A673 (cell line): ENCODE measurements at regions of chr18 and their contacts with region 1.

Region 1: DNA sequence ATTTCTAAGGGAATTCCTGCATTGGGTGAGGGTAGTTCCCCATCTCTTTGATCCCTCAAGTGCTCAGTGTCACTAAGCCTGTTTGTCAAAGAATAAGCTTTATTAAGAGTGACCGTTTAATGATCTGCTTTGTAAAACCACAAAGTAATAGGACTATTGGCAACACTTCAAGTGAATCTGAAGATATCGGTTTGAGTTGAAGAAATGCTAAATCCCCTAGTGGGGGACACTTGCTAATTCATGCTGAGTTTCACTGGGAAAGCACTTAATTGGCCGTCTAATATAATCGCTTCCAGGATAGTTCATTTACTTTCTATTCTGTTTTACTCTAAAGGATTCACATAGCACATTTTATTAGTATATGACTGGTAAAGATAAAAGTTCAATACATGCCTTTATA is 54.4 kb downstream of the DTNA start:
- DNase-seq: peak; percentile 47
- H3K4me3 ChIP-seq: no peak overlapping the region
- H3K27ac ChIP-seq: no peak overlapping the region
- H3K4me1 ChIP-seq: peaks cover 8% of the 10 kb centered on the region
- H3K27me3 ChIP-seq: no peaks in the 10 kb centered on the region
- CTCF ChIP-seq: peak; percentile 32; the same call in 1 of the 2 replicates

Region 2: DNA sequence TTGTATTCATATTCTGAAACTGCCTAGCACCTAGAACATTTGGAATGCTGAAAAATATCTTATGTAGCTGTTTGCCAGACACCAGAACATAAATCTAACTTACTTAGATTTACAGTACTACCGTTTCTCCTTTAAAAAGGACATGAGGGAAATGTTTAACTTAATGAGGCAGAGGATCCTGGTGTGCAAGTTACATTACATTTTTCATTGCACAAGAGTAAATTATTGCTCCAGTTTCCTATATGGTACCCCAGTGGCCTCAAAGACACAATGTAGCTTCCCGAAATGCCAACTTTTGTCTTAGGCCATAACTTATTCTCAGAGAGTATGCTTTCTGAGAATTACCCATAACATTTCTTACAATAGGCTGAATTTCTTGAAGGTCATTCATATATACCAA is 159.9 kb before region 1 on chr18:
- CTCF ChIA-PET with region 1: interaction called, 12 read pairs
- POLR2A ChIA-PET with region 1: no interaction called
- intact Hi-C with region 1: no loop called
- DNase-seq: peak; percentile 78
- H3K4me3 ChIP-seq: no peak overlapping the region
- H3K27ac ChIP-seq: peak overlapping the region; percentile 28
- H3K4me1 ChIP-seq: peaks cover 37% of the 10 kb centered on the region
- H3K27me3 ChIP-seq: no peaks in the 10 kb centered on the region
- CTCF ChIP-seq: no peak

Region 3: GRCh38 chr18:34783501-34783900 is 19.1 kb after region 1 on chr18:
- CTCF ChIA-PET with region 1: no interaction called
- POLR2A ChIA-PET with region 1: no interaction called
- intact Hi-C with region 1: no loop called
- DNase-seq: no peak
- H3K4me3 ChIP-seq: no peak overlapping the region
- H3K27ac ChIP-seq: no peak overlapping the region
- H3K4me1 ChIP-seq: peaks cover 7% of the 10 kb centered on the region
- H3K27me3 ChIP-seq: no peaks in the 10 kb centered on the region
- CTCF ChIP-seq: no peak

Region 4: GRCh38 chr18:34880882-34881834 is 116.7 kb after region 1 on chr18:
- CTCF ChIA-PET with region 1: no interaction called
- POLR2A ChIA-PET with region 1: no interaction called
- intact Hi-C with region 1: no loop called
- DNase-seq: no peak
- H3K4me3 ChIP-seq: no peak overlapping the region
- H3K27ac ChIP-seq: no peak overlapping the region
- H3K4me1 ChIP-seq: no peaks in the 10 kb centered on the region
- H3K27me3 ChIP-seq: no peaks in the 10 kb centered on the region
- CTCF ChIP-seq: peak; percentile 28; the same call in 1 of the 2 replicates

Region 5: DNA sequence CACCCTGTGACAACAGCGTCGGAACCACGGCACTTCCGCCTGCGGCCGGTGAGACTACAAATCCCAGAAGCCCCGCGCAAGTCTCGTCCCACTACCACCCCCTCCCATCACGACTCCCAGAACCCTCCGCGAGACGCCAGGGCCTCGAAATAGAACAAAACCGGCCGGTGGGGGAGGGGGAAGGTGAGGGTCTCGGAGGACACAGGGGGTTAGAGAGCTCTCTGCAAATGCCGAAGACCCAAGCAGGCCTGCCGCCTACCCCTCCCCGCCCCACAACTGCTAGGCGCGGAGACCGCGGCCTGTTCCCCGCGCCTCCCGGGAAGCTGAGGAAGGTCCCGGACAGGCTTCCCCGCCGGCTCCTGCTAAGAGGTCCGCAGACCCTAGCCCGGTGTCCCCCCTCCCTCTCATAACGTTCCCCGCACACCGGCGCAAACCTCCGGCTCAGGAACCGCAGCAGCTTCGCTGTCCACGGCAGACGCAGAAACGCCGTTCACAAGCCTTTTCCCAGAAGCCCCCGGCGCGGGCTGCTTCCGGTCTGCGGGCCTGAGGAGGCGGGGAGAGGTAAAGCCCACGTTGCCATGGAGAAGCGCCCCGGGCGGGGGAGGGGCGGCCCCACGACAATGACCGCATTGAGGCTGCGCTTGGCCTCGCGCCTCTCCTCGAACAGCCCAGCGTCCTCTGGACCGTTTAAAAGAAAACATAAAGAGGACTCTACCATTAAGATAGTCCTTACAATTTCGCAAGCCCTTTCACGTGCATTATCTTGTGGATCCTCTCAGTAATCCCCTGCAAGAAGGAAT is 579.7 kb after region 1 on chr18 and contains the start of gene ZNF24:
- CTCF ChIA-PET with region 1: no interaction called
- POLR2A ChIA-PET with region 1: no interaction called
- intact Hi-C with region 1: no loop called
- DNase-seq: peak; percentile 96
- H3K4me3 ChIP-seq: peak within 1 kb of the TSS; percentile 76
- H3K27ac ChIP-seq: peak within 1 kb of the TSS; percentile 97
- H3K4me1 ChIP-seq: peaks cover 5% of the 10 kb centered on the region
- H3K27me3 ChIP-seq: no peaks in the 10 kb centered on the region
- CTCF ChIP-seq: no peak
- total RNA-seq, gene ZNF24: 59.8 and 63.3 TPM in 2 replicates